ENCODE measurements at regions of chr15 and their contacts with region 1.

Region 1: DNA sequence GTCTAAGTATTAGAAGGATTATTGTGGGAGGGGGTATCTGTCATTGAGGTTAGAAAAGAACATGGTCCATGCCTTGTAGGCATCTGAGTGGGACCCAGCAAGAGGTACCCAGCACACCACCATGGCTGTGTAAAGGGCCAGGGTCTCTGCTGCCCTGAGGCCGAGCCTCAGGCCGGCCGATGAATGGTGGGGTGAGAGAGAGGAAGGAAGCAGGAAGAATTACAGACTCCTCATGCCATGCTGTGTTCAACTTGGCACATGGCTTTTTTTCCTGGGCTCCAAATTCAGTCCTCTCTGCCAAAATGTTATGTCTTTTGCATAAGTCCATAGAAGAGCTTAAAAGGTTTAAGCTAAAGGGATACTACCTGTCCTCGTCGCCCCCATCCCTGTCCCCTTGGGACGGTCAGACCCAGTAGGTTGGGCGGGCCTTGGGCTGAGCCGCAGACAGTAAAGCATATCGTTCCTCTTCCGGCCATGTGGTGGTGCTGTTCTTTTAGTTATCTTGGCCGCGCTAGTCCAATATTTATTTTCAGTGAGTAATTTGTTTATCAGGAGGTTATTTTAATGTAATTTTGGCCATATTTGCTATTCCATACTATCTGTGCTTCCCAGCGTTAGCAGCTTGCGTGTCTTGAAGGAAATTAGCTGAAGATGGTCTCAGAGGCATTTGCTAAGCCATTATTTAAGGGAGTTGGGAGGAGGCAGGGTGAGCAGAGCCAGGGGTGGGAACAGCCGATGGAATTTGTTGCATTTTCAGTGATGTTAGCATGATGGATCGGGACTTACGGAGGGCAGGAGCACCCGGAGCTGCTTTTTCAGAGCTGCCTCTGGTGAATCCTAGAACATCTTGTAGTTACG is 152.4 kb downstream of the AGBL1 start:
- DNase-seq: peak; percentile 57
- H3K4me3 Mint-ChIP-seq: no peak overlapping the region
- H3K27ac Mint-ChIP-seq: no peak overlapping the region
- H3K4me1 Mint-ChIP-seq: no peaks in the 10 kb centered on the region
- H3K27me3 Mint-ChIP-seq: no peaks in the 10 kb centered on the region
- CTCF ChIP-seq: peak; percentile 82

Region 2: GRCh38 chr15:85858586-85859375 is 373.3 kb before region 1 on chr15:
- CTCF ChIA-PET with region 1: interaction called, 12 read pairs
- POLR2A ChIA-PET with region 1: no interaction called
- intact Hi-C with region 1: no loop called
- DNase-seq: peak; percentile 73
- H3K4me3 Mint-ChIP-seq: no peak overlapping the region
- H3K27ac Mint-ChIP-seq: no peak overlapping the region
- H3K4me1 Mint-ChIP-seq: no peaks in the 10 kb centered on the region
- H3K27me3 Mint-ChIP-seq: peaks cover 32% of the 10 kb centered on the region
- CTCF ChIP-seq: peak; percentile 89

Region 3: DNA sequence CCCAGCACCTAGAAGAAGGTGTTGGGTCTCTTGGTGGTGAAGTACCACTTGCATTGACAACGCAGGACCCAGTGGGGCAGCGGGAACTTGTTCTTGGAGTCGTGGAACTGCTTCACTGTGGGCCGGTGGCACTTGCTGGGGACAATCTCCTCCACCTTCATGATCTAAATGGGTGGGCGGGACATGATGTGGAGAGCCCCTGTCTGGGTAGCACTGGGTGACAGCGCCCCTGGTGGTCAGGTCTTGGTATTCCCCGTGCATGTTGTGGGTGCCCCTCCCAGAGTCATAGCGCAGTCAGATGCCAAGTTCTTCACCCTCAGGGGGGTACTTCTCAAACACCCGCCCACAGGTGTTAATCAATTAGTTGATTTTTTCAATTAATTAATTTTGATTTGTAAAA is 92.3 kb before region 1 on chr15:
- CTCF ChIA-PET with region 1: no interaction called
- POLR2A ChIA-PET with region 1: no interaction called
- intact Hi-C with region 1: no loop called
- DNase-seq: no peak
- H3K4me3 Mint-ChIP-seq: no peak overlapping the region
- H3K27ac Mint-ChIP-seq: no peak overlapping the region
- H3K4me1 Mint-ChIP-seq: no peaks in the 10 kb centered on the region
- H3K27me3 Mint-ChIP-seq: peaks cover 11% of the 10 kb centered on the region
- CTCF ChIP-seq: peak; percentile 30

Region 4: DNA sequence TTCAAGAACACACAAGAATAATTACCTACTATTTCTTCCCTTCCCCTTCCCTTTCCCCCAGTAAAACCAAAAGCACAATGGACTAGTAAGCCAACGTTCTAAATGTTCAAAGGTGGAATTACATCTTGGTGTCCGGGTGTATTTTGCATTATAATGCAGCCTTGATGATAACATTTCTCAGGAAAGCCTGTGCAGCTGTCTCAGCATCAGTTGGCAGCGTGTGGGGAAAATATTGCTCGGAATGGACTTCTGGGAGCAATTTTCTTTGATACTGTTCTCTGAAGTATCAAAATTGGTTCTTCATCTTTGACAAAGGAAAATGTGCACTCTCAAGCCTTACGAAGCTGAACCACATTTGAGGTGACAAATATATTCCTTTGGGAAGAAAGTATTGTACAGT is 46.5 kb after region 1 on chr15:
- CTCF ChIA-PET with region 1: no interaction called
- POLR2A ChIA-PET with region 1: no interaction called
- intact Hi-C with region 1: no loop called
- DNase-seq: no peak
- H3K4me3 Mint-ChIP-seq: no peak overlapping the region
- H3K27ac Mint-ChIP-seq: no peak overlapping the region
- H3K4me1 Mint-ChIP-seq: no peaks in the 10 kb centered on the region
- H3K27me3 Mint-ChIP-seq: no peaks in the 10 kb centered on the region
- CTCF ChIP-seq: no peak

Region 5: GRCh38 chr15:86555939-86556338 is 323.8 kb after region 1 on chr15:
- CTCF ChIA-PET with region 1: interaction called, 10 read pairs
- POLR2A ChIA-PET with region 1: no interaction called
- intact Hi-C with region 1: no loop called
- DNase-seq: peak; percentile 58
- H3K4me3 Mint-ChIP-seq: peak overlapping the region; percentile 33
- H3K27ac Mint-ChIP-seq: peak overlapping the region; percentile 69
- H3K4me1 Mint-ChIP-seq: peaks cover 32% of the 10 kb centered on the region
- H3K27me3 Mint-ChIP-seq: no peaks in the 10 kb centered on the region
- CTCF ChIP-seq: no peak

Region 6: GRCh38 chr15:86743283-86743903 is 511.3 kb after region 1 on chr15:
- CTCF ChIA-PET with region 1: interaction called, 62 read pairs
- POLR2A ChIA-PET with region 1: no interaction called
- intact Hi-C with region 1: loop called (anchors 1 kb)
- DNase-seq: peak; percentile 55
- H3K4me3 Mint-ChIP-seq: no peak overlapping the region
- H3K27ac Mint-ChIP-seq: no peak overlapping the region
- H3K4me1 Mint-ChIP-seq: no peaks in the 10 kb centered on the region
- H3K27me3 Mint-ChIP-seq: no peaks in the 10 kb centered on the region
- CTCF ChIP-seq: peak; percentile 90

Region 7: DNA sequence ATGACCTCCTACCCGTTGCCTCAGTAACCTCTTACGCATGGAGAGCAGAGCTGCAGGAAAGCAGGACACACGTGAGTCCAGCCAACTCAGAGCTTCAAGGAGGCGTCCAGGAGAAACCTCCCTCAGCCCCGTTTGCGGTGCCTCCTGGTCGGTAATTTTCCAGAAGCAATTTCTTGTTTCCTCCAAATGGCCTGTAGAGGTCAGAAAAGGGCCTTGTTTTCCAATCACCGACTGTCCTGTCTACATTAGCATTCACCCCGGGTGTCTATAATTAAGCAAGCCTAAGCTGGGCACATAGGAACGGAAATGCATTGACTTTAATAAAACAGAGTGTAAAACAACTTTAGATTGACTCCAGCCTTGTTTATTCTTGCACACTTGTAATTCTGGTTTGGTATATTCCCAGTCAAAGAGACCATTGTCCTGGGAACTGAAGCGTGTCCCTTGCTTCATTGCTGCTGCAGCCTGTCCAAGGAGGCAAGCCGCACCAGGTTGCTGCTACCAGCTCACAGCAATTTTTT is 683.8 kb after region 1 on chr15:
- CTCF ChIA-PET with region 1: interaction called, 5 read pairs
- POLR2A ChIA-PET with region 1: no interaction called
- intact Hi-C with region 1: loop called (anchors 5 kb)
- DNase-seq: peak; percentile 42
- H3K4me3 Mint-ChIP-seq: no peak overlapping the region
- H3K27ac Mint-ChIP-seq: no peak overlapping the region
- H3K4me1 Mint-ChIP-seq: no peaks in the 10 kb centered on the region
- H3K27me3 Mint-ChIP-seq: no peaks in the 10 kb centered on the region
- CTCF ChIP-seq: peak; percentile 51